Brain microvascular endothelial cell (primary cell): ENCODE measurements at regions of chr10 and their contacts with region 1.

Region 1: GRCh38 chr10:110076559-110077318 is 69.0 kb downstream of the ADD3 start:
- DNase-seq: peak; percentile 87
- H3K4me3 ChIP-seq: peak overlapping the region; percentile 12
- H3K27ac ChIP-seq: peak overlapping the region; percentile 94
- H3K27me3 ChIP-seq: no peaks in the 10 kb centered on the region
- CTCF ChIP-seq: no peak

Region 2: GRCh38 chr10:109883859-109884771 is 192.6 kb before region 1 on chr10:
- in situ Hi-C with region 1: loop called (anchors 25 kb)
- DNase-seq: peak; percentile 79
- H3K4me3 ChIP-seq: peak overlapping the region; percentile 20
- H3K27ac ChIP-seq: peak overlapping the region; percentile 76
- H3K27me3 ChIP-seq: no peaks in the 10 kb centered on the region
- CTCF ChIP-seq: peak; percentile 90